OCI-LY7 (cell line): ENCODE measurements at regions of chr1 and their contacts with region 1.

Region 1: DNA sequence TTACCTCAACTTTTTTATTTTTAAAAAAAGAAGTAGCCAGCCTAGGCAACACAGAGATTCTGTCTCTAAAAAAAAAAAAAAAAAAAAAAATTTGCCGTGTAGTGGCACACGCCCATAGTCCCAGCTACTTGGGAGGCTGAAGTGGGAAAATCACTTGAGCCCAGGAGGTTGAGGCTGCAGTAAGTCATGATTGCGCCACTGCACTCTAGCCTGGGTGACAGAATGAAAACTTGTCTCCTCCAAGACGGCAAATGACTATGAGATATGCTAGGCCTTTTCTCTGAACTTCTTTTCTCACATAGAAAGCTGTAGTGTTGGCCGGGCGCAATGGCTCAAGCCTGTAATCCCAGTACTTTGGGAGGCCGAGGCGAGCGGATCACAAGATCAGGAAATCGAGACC is 24.7 kb upstream of the PTCH2 start:
- DNase-seq: no peak
- H3K4me3 ChIP-seq: no peak overlapping the region
- H3K27ac ChIP-seq: no peak overlapping the region
- H3K4me1 ChIP-seq: no peaks in the 10 kb centered on the region
- CTCF ChIP-seq: no peak

Region 2: DNA sequence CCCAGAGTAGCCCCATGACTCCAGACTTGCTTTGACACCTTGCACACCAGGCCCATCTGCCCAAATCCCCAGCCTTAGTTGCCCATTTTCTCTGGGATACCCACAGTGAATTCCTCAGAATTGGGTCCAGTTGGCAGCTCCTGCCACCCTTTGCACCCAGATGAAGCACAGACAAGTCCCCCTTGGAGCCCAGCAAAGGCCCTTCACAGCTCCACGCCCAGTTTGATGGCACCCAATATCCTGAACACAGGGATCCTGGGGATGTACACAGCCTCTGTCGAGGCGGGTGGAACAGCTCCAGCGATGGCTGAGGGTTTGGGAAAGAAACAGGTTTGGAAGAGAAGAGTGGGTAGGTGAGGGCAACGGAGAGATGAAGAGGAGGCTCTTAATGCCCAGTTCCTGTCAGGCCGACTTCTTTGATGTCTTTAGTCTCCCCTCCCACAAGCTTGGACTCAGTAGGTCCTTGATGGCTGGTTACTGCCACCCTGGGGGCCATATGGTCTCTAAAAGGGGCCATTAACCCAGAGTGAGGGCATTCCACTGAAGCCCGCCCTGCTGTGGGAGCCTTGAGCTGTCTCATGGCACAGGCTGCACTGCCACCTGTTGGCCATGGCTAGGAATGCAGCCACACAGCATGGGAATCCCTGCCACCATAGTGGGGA is 215.2 kb before region 1 on chr1:
- CTCF ChIA-PET with region 1: no interaction called
- POLR2A ChIA-PET with region 1: no interaction called
- intact Hi-C with region 1: no loop called
- DNase-seq: peak; percentile 76
- H3K4me3 ChIP-seq: no peak overlapping the region
- H3K27ac ChIP-seq: peak overlapping the region; percentile 14
- H3K4me1 ChIP-seq: no peaks in the 10 kb centered on the region
- CTCF ChIP-seq: peak; percentile 93

Region 3: DNA sequence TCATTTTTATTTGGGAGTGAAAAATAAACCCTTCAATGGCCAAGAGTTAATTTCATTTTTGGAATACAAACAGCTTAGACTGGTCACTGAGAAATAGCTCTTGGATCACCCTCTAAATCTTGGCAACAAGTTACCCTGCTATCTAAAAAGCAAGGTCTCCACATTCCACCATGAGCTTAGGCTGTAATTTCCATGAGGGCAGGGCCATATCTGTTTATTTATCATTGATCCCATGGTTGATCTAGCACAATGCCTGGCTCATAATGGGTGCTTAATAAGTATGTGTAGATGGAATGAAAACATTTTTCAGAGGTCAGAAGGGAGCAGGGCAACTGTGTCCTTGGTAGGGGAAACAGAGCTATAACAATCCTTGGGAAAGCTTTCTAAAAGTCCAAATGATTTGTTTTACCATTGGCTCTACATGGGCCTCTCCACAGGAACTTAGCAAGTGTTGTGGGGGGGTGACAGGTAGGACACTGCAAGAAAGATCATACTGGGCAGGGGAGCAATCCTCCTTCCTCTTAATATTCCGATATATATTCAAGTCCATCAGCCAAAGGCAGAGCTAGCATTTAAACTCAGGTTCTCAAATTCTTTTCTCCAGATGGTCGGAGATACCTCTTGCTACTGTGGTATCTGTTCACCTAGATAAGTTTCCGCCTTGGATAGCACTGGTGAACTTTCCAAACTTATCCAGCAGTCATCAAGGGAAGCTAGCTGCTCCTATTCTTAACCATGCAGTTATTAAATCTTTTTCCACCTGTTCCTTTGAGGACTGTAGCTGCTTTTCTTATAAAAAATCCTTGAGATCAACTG is 28.3 kb after region 1 on chr1:
- CTCF ChIA-PET with region 1: no interaction called
- POLR2A ChIA-PET with region 1: interaction called, 10 read pairs
- intact Hi-C with region 1: no loop called
- DNase-seq: no peak
- H3K4me3 ChIP-seq: no peak overlapping the region
- H3K27ac ChIP-seq: no peak overlapping the region
- H3K4me1 ChIP-seq: no peaks in the 10 kb centered on the region
- CTCF ChIP-seq: no peak